ENCODE measurements at regions of chr7 and their contacts with region 1.

Region 1: DNA sequence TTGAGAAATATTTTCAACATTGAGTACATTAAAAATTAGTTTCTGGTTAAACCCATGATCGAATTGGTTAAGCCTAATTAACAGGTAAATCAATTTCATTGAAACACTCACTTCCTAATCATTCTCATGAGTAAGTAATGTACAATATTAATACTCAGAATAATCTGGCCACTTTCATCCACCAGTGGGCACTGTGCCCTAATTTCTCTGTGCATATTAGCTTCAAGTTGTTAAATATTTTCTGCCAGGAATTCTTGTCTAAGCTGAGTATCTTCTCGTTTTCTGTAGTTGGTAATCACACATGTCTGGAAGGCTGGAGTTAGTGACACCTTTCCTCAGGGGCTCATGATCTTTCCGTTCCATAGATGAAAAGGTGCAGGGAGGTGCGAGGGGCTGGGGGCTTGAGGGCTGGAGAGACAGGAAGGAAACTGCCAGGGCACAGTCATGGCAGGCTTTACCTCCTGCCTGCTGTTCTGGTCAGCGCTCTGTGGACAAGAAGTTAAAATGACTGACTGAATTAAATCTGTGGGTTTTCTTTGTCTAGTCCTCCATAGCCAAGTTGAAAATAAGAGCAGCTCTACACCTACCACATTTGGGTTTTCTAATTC is 71.9 kb downstream of the WIPF3 start:
- DNase-seq: peak; percentile 79
- H3K4me3 ChIP-seq: no peak overlapping the region
- H3K27ac ChIP-seq: no peak overlapping the region
- H3K4me1 ChIP-seq: peaks cover 0 to 2% of the 10 kb centered on the region in 2 experiments; a peak in 1 of 4 replicates
- H3K27me3 ChIP-seq: no peaks in the 10 kb centered on the region
- CTCF ChIP-seq: peak; percentile 95
- EP300 ChIP-seq: no peak
- RAD21 ChIP-seq: peak; percentile 97

Region 2: DNA sequence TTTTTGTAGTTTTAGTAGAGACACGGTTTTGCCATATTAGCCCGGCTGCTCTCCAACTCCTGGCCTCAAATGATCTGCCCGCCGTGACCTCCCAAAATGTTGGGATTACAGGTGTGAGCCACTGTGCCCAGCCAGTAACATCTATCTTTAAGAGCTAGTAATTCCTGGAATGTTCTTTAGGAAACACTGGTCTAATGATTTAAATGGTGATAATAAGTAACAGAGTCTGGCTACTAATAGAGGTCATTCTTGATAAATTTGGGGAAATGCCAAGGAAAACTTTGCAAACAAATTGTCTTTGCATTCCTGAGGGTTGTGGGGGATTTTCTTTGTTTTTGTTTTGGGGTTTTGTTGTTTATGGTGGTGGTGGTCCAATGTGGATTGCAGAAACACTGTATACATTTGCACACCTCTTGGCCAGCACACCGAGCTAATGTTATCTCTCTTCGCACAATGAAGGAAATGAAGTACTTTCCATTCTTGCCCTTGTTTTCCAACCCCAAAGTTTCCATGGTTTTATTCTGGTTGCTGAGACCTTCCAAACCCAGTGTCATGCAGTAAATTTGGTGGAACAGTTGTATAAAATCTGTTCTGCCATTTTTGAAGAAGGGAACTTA is 123.2 kb before region 1 on chr7:
- CTCF ChIA-PET with region 1: interaction called, 23 read pairs
- POLR2A ChIA-PET with region 1: no interaction called
- DNase-seq: no peak
- H3K4me3 ChIP-seq: no peak overlapping the region
- H3K27ac ChIP-seq: no peak overlapping the region
- H3K4me1 ChIP-seq: no peaks in the 10 kb centered on the region
- H3K27me3 ChIP-seq: no peaks in the 10 kb centered on the region
- CTCF ChIP-seq: no peak
- EP300 ChIP-seq: no peak
- RAD21 ChIP-seq: no peak

Region 3: DNA sequence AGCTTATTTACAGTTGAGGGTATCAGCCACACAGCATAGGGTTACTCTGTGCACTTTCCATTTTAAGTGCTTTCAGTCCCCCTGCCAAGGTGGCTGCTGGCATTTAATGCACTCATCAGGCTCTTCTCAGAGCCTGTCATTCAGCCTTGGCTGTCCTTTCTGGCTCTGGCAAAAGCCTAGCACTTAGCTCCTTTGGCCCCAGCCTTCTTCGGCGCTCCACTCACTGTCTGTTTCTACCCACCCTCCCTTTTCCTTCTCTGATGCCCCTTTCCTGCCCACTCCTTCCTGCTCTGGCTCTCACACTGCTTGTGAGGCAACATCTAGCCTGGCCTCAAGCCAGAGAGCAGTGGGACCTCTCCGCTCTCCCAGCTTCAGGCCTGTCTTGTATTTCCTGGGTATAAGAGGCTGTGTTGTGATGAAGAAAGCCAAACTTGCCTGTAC is 11.7 kb before region 1 on chr7:
- CTCF ChIA-PET with region 1: interaction called, 15 read pairs
- POLR2A ChIA-PET with region 1: no interaction called
- DNase-seq: no peak
- H3K4me3 ChIP-seq: no peak overlapping the region
- H3K27ac ChIP-seq: no peak overlapping the region
- H3K4me1 ChIP-seq: peaks cover 13 to 16% of the 10 kb centered on the region in 2 experiments; a peak in 3 of 4 replicates
- H3K27me3 ChIP-seq: no peaks in the 10 kb centered on the region
- CTCF ChIP-seq: no peak
- EP300 ChIP-seq: no peak
- RAD21 ChIP-seq: no peak

Region 4: DNA sequence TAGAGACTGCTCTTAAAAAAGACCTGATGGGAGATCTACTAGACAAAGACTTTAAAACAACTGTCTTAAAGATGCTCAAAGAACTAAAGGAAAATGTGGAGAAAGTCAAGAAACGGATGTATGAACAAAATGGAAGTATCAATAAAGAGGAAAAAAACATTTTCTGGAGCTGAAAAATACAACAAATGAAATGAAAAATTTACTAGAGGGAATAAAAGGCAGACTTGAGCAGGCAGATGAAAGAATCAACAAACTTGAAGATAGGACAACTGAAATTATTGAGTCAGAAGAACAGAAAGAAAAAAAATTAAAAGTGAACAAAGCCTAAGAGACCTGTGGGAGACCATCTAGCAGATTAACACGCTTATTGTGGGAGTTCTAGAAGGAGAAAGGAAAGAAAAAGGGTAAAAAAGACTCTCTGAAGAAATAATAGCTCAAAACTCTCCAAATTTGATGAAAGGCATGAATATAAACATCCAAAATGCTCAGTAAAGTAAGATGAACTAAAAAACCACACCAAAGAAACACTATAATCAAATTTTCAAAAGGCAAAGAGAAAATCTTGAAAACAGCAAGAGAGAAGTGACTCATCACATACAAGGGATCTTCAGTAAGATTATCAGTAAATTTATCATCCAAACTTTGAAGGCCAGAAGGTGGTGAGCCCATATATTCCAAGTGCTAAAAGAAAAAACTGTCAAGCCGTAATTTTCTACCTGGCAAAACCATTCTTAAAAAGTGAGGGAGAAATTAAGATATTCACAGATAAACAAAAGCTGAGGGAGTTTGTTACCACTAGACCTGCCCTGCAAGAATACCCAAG is 28.2 kb after region 1 on chr7:
- CTCF ChIA-PET with region 1: interaction called, 21 read pairs
- POLR2A ChIA-PET with region 1: no interaction called
- DNase-seq: no peak
- H3K4me3 ChIP-seq: no peak overlapping the region
- H3K27ac ChIP-seq: no peak overlapping the region
- H3K4me1 ChIP-seq: no peaks in the 10 kb centered on the region; a peak in 1 of 4 replicates
- H3K27me3 ChIP-seq: no peaks in the 10 kb centered on the region
- CTCF ChIP-seq: no peak
- EP300 ChIP-seq: no peak
- RAD21 ChIP-seq: no peak

Measured in SK-N-SH (cell line).